ENCODE measurements at regions of chr5 and their contacts with region 1.

Region 1: GRCh38 chr5:38922199-38922598 is 76.4 kb downstream of the OSMR start:
- DNase-seq: peak; percentile 68 to 73
- ATAC-seq: peak; percentile 88 to 95
- H3K4me3 ChIP-seq: no peak overlapping the region
- H3K27ac ChIP-seq: no peak overlapping the region
- H3K4me1 ChIP-seq: no peaks in the 10 kb centered on the region
- CTCF ChIP-seq: peak; percentile 84
- EP300 ChIP-seq: no peak
- POLR2A ChIP-seq: no peak
- RAD21 ChIP-seq: peak; percentile 85 to 93

Region 2: DNA sequence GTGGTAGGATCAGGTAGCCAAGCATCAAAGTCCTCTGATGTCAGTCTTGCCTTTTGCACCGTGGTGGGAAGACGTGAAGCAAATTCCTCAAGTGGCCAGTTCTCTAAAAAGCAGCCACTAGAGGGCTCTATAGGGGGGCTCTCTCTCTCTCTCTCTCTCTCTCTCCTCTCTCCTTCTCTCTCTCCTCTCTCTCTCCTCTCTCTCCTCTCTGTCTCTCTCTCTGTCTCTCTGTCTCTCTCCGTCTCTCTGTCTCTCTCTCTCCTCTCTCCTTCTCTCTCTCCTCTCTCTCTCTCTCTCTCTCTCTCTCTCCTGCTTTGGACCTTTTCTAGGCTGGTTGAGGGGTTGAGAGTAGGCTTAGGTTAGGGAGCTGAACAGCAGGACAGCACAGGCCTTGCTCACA is 90.3 kb before region 1 on chr5:
- CTCF ChIA-PET with region 1: interaction called, 59 read pairs
- POLR2A ChIA-PET with region 1: no interaction called
- DNase-seq: peak in 1 of 2 experiments; percentile 66
- ATAC-seq: peak; percentile 52 to 78; a peak in 3 of 6 replicates
- H3K4me3 ChIP-seq: no peak overlapping the region
- H3K27ac ChIP-seq: 0 out of 6 replicates have a peak overlapping the region, but pooled peaks of 1 of the 2 experiments have one; percentile 11
- H3K4me1 ChIP-seq: peaks cover 19% of the 10 kb centered on the region; the same call in 2 of the 3 replicates
- CTCF ChIP-seq: peak; percentile 50
- EP300 ChIP-seq: no peak
- POLR2A ChIP-seq: no peak
- RAD21 ChIP-seq: peak; percentile 31 to 48; a peak in 3 of 5 replicates

Region 3: DNA sequence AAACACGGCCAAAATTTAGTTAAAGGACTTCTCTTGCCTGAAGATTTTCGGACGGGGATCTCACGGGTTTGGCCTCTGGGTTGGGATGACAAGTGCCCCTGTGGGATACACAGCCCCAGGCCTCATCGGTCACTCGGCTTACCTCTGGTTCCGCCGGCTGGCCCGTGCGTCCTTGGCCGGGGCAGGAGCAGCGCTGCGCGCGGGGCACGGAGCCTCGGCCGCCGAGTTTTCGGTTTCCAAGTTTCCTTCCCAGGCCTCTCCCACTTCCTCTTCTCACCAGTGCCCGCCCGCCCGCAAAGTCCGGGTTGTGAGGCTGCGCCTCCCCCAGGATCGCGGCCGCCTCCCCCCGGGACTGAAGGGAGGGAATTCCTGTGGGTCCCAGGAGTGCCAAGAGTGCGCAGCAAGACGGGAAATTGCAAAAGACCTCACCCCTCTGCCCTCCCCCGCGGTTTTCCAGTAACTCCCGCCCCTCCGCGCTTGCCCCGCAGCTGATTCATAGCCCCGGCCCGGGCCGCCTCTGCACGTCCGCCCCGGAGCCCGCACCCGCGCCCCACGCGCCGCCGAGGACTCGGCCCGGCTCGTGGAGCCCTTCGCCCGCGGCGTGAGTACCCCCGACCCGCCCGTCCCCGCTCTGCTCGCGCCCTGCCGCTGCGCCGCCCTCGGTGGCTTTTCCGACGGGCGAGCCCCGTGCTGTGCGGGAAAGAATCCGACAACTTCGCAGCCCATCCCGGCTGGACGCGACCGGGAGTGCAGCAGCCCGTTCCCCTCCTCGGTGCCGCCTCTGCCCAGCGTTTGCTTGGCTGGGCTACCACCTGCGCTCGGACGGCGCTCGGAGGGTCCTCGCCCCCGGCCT is 76.4 kb before region 1 on chr5 and contains the start of gene OSMR:
- CTCF ChIA-PET with region 1: interaction called, 10 read pairs
- POLR2A ChIA-PET with region 1: no interaction called
- DNase-seq: peak; percentile 95 to 96
- ATAC-seq: peak; percentile 93 to 94
- H3K4me3 ChIP-seq: peak within 1 kb of the TSS; percentile 94
- H3K27ac ChIP-seq: peak within 1 kb of the TSS; percentile 97 to 99
- H3K4me1 ChIP-seq: peaks cover 17% of the 10 kb centered on the region; the same call in 2 of the 3 replicates
- CTCF ChIP-seq: no peak
- EP300 ChIP-seq: peak; percentile 68 to 89; a peak in 3 of 5 replicates
- POLR2A ChIP-seq: peak; percentile 68
- RAD21 ChIP-seq: peak; percentile 13 to 39; a peak in 2 of 5 replicates
- polyA plus RNA-seq, gene OSMR: 92.4 and 133 TPM in 2 replicates

Region 4: GRCh38 chr5:38892363-38892762 is 29.8 kb before region 1 on chr5:
- CTCF ChIA-PET with region 1: interaction called, 12 read pairs
- POLR2A ChIA-PET with region 1: no interaction called
- DNase-seq: no peak
- ATAC-seq: no peak
- H3K4me3 ChIP-seq: no peak overlapping the region
- H3K27ac ChIP-seq: no peak overlapping the region
- H3K4me1 ChIP-seq: no peaks in the 10 kb centered on the region
- CTCF ChIP-seq: no peak
- EP300 ChIP-seq: no peak
- POLR2A ChIP-seq: no peak
- RAD21 ChIP-seq: no peak

Region 5: DNA sequence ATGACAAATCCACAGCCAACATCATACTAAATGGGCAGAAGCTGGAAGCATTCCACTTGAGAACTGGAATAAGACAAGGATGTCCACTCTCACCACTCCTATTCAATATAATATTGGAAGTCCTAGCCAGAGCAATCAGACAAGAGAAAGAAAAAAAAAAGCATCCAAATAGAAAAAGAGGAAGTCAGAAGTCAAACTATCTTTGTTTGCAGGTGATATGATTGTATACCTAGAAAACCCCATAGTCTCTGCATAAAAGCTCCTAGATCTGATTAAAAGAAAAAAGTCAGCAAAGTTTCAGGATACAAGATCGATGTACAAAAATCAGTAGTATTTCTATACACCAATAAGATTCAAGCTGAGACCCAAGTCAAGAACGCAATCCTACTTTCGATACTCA is 10.3 kb before region 1 on chr5:
- CTCF ChIA-PET with region 1: interaction called, 15 read pairs
- POLR2A ChIA-PET with region 1: no interaction called
- DNase-seq: no peak
- ATAC-seq: no peak
- H3K4me3 ChIP-seq: no peak overlapping the region
- H3K27ac ChIP-seq: no peak overlapping the region
- H3K4me1 ChIP-seq: no peaks in the 10 kb centered on the region
- CTCF ChIP-seq: no peak
- EP300 ChIP-seq: no peak
- POLR2A ChIP-seq: no peak
- RAD21 ChIP-seq: no peak

Region 6: GRCh38 chr5:38978036-38978435 is 55.8 kb after region 1 on chr5:
- CTCF ChIA-PET with region 1: no interaction called
- POLR2A ChIA-PET with region 1: no interaction called
- DNase-seq: no peak
- ATAC-seq: no peak
- H3K4me3 ChIP-seq: no peak overlapping the region
- H3K27ac ChIP-seq: no peak overlapping the region
- H3K4me1 ChIP-seq: no peaks in the 10 kb centered on the region
- CTCF ChIP-seq: no peak
- EP300 ChIP-seq: no peak
- POLR2A ChIP-seq: no peak
- RAD21 ChIP-seq: no peak

Measured in A549 (cell line).